Dorsolateral prefrontal cortex (tissue), 120 donors: ENCODE measurements at regions of chr11 and their contacts with region 1.

Region 1: DNA sequence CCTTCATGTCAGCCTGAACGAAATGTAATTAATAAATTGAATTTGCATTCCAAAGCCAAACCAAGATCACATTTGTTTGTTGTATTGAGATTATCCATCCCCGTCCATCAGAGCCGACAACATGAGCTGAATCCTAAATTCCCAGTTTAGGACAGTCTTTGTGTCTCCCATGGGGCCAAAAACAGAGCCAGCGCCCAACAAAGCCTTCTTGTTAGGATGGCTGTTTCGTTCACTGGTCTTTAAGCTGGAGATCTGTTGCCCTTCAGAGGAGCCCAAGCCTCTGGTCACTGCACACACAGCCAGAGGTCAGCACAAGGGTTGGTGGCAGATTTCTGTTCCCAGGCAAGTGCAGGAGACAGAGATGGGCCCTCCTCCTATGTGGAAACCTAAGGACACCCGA is 25.8 kb downstream of the DSCAML1 start:
- DNase-seq: peak in 8 of 10 donors; percentile 49 to 87 (median 76)
- H3K4me3 ChIP-seq: no peak overlapping the region
- H3K27ac ChIP-seq: peak overlapping the region in 58 of 59 donors; percentile 59 to 97 (median 87)
- H3K27me3 ChIP-seq: no peaks in the 10 kb centered on the region
- CTCF ChIP-seq: peak in 7 of 56 donors; percentile 8 to 34 (median 18)

Region 2: DNA sequence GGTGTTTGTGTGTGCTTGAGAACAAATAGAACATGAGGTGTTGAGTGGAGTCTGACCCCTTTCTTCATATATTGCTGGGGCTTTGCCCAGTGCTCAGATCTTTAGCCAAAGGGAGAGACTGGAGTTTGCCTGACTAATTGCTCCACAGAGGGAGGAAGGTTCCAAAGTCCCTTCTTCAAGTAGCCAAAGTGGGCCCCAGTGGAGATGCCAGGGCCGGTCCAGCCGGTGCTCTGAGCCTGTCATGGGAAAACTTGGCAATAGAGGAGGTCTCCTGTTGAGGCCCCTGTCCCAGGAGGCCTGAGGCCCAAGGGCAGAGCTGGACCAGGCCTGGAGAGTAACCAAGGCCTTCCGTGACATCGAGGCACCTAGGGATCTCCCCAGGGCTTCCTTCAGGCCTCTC is 86.5 kb before region 1 on chr11:
- intact Hi-C with region 1: loop called in 1 of 2 experiments (anchors 5 kb)
- DNase-seq: no peak
- H3K4me3 ChIP-seq: no peak overlapping the region
- H3K27ac ChIP-seq: peak overlapping the region in 58 of 59 donors; percentile 8 to 99 (median 76)
- H3K27me3 ChIP-seq: no peaks in the 10 kb centered on the region
- CTCF ChIP-seq: no peak

Region 3: GRCh38 chr11:117734601-117735024 is 36.6 kb before region 1 on chr11:
- intact Hi-C with region 1: loop called (anchors 5 kb)
- DNase-seq: peak in 5 of 10 donors; percentile 50 to 65 (median 59)
- H3K4me3 ChIP-seq: no peak overlapping the region
- H3K27ac ChIP-seq: peak overlapping the region; percentile 51 to 98 (median 93)
- H3K27me3 ChIP-seq: no peaks in the 10 kb centered on the region
- CTCF ChIP-seq: no peak

Region 4: DNA sequence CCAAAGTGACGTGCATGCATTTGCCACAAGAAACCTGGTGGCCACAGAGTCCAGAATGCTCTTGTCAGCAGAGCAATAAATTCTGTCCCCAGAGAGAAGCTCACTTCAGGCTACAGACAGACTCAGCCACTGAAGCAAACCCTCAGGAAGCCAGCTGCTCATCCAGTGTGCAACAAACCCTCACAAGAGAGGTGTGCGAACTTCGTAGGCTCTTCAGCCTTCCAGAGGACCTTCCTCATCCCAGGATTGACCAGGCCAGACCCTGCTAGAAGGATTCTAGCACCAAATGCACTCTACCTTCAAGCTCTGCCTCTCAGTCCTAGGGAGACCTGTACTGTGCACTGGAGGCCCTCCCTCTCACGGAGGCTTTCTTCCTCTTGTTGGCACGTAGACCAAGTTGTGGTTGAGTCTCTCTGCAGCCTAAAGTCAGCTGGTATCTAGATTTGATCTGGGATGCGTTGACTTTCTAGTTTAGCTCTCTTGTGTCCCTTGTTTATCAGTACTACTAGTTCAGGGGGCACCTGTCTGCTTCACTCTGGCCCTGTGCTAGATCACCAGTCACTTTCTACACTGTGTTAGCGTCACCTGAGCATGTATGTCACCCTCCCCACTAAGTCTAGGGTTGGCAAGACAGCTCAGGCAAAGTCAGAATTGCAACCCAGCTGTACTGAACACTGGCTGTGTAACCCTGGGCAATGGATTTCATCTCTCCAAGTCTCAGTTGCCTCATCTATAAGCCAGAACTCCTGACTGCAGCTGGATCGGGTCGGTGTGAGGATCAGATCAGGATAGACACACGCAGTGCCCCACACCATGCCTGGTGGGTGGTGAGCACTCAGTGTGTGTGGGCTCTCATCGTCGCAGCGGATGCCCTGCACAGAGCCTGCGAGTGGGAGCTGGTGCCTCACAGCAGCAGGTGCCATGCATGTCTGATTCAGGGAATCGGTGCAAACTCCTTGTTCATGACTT is 180.1 kb after region 1 on chr11:
- intact Hi-C with region 1: no loop called
- DNase-seq: peak in 3 of 10 donors; percentile 19 to 69 (median 35)
- H3K4me3 ChIP-seq: no peak overlapping the region
- H3K27ac ChIP-seq: no peak overlapping the region
- H3K27me3 ChIP-seq: peaks cover 0 to 6% (median 0%) of the 10 kb centered on the region in 45 donors
- CTCF ChIP-seq: no peak